ENCODE measurements at regions of chr3 and their contacts with region 1.

Region 1: GRCh38 chr3:171248425-171249111 is 211.6 kb downstream of the TNIK start:
- DNase-seq: peak in 1 of 9 donors; percentile 18
- ATAC-seq: peak; percentile 60
- H3K4me3 ChIP-seq: peak overlapping the region; percentile 30
- H3K4me3 Mint-ChIP-seq: no peak overlapping the region
- H3K27ac ChIP-seq: peak overlapping the region; percentile 43
- H3K27ac Mint-ChIP-seq: no peak overlapping the region
- H3K4me1 ChIP-seq: peaks cover 38 to 53% of the 10 kb centered on the region in 2 donors
- H3K4me1 Mint-ChIP-seq: peaks cover 22 to 40% (median 33%) of the 10 kb centered on the region in 7 donors
- H3K27me3 ChIP-seq: no peaks in the 10 kb centered on the region
- H3K27me3 Mint-ChIP-seq: no peaks in the 10 kb centered on the region

Region 2: GRCh38 chr3:171028025-171028778 is 220.4 kb before region 1 on chr3:
- CTCF ChIA-PET with region 1: no interaction called
- POLR2A ChIA-PET with region 1: no interaction called
- intact Hi-C with region 1: no loop called
- DNase-seq: peak in 6 of 9 donors; percentile 10 to 49 (median 24)
- ATAC-seq: peak; percentile 54
- H3K4me3 ChIP-seq: peak overlapping the region; percentile 25
- H3K4me3 Mint-ChIP-seq: no peak overlapping the region
- H3K27ac ChIP-seq: no peak overlapping the region
- H3K27ac Mint-ChIP-seq: no peak overlapping the region
- H3K4me1 ChIP-seq: no peaks in the 10 kb centered on the region
- H3K4me1 Mint-ChIP-seq: peaks cover 0 to 6% (median 0%) of the 10 kb centered on the region in 7 donors
- H3K27me3 ChIP-seq: peaks cover 0 to 4% of the 10 kb centered on the region in 2 donors
- H3K27me3 Mint-ChIP-seq: peaks cover 0 to 29% (median 16%) of the 10 kb centered on the region in 5 donors

Region 3: GRCh38 chr3:171225708-171226107 is 22.9 kb before region 1 on chr3:
- CTCF ChIA-PET with region 1: no interaction called
- POLR2A ChIA-PET with region 1: interaction called, 4 read pairs
- intact Hi-C with region 1: loop called in 1 of 2 experiments (anchors 2 kb)
- DNase-seq: no peak
- ATAC-seq: no peak
- H3K4me3 ChIP-seq: no peak overlapping the region
- H3K4me3 Mint-ChIP-seq: peak overlapping the region in 2 of 10 donors; percentile 41 to 48
- H3K27ac ChIP-seq: no peak overlapping the region
- H3K27ac Mint-ChIP-seq: peak overlapping the region in 6 of 9 donors; percentile 21 to 73 (median 56)
- H3K4me1 ChIP-seq: peaks cover 6 to 11% of the 10 kb centered on the region in 2 donors
- H3K4me1 Mint-ChIP-seq: peaks cover 3 to 72% (median 60%) of the 10 kb centered on the region in 7 donors
- H3K27me3 ChIP-seq: no peaks in the 10 kb centered on the region
- H3K27me3 Mint-ChIP-seq: no peaks in the 10 kb centered on the region

Region 4: GRCh38 chr3:171230865-171231264 is 17.7 kb before region 1 on chr3:
- CTCF ChIA-PET with region 1: interaction called, 3 read pairs
- POLR2A ChIA-PET with region 1: interaction called, 3 read pairs
- intact Hi-C with region 1: loop called in 1 of 2 experiments (anchors 2 kb)
- DNase-seq: no peak
- ATAC-seq: no peak
- H3K4me3 ChIP-seq: no peak overlapping the region
- H3K4me3 Mint-ChIP-seq: peak overlapping the region in 1 of 10 donors; percentile 3
- H3K27ac ChIP-seq: no peak overlapping the region
- H3K27ac Mint-ChIP-seq: peak overlapping the region in 6 of 9 donors; percentile 7 to 83 (median 37)
- H3K4me1 ChIP-seq: no peaks in the 10 kb centered on the region
- H3K4me1 Mint-ChIP-seq: peaks cover 19 to 72% (median 63%) of the 10 kb centered on the region in 7 donors
- H3K27me3 ChIP-seq: no peaks in the 10 kb centered on the region
- H3K27me3 Mint-ChIP-seq: no peaks in the 10 kb centered on the region

Region 5: DNA sequence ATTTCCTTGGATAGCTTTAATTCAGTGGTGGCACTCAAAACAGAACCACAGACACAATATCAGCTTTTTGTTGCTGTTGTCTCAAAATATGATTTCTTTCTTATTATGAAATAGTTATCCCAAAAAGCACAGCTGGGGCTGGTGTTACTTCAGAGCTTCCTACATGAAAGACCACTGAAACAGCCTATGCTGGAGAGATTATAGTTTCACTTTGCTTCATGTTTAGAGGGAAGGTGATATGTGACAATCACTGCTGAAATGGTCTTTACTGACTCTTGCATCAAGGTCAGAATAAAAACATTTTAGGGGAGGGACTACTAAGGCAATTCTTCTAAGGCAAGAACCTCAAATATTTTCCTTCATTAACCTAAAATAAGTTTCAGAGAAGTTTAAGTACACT is 21.0 kb after region 1 on chr3:
- CTCF ChIA-PET with region 1: interaction called, 8 read pairs
- POLR2A ChIA-PET with region 1: interaction called, 99 read pairs
- intact Hi-C with region 1: loop called (anchors 2 kb)
- DNase-seq: peak in 3 of 9 donors; percentile 34 to 50 (median 44)
- ATAC-seq: peak; percentile 76
- H3K4me3 ChIP-seq: peak overlapping the region; percentile 3
- H3K4me3 Mint-ChIP-seq: peak overlapping the region; percentile 13 to 85 (median 60)
- H3K27ac ChIP-seq: peak overlapping the region; percentile 52
- H3K27ac Mint-ChIP-seq: peak overlapping the region in 8 of 9 donors; percentile 65 to 93 (median 84)
- H3K4me1 ChIP-seq: peaks cover 32 to 44% of the 10 kb centered on the region in 2 donors
- H3K4me1 Mint-ChIP-seq: peaks cover 43 to 95% (median 88%) of the 10 kb centered on the region in 7 donors
- H3K27me3 ChIP-seq: no peaks in the 10 kb centered on the region
- H3K27me3 Mint-ChIP-seq: no peaks in the 10 kb centered on the region

Measured in naive thymus-derived CD4-positive, alpha-beta T cell (primary cell).